IMR-90 (cell line): ENCODE measurements at regions of chr11 and their contacts with region 1.

Region 1: DNA sequence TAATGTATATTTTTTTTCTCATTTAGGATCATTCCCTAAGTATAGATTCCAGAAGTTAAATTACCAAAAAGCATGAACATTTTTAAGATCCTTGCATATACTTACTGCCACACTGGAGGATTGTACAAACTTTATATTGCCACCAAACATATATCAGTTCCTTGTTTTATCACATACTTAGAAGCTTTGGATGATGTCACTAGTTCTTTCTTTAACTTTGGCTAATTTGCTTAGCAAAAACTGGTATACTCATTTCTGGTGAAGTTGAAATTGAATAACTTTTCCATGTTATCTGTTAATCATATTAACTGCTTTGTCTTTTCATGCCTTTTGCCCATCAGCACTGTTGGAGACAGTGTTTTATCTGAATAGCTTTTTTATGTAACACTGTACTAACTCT is 31.6 kb upstream of the PRDM10 start:
- DNase-seq: no peak
- ATAC-seq: no peak
- H3K4me3 ChIP-seq: no peak overlapping the region
- H3K27ac ChIP-seq: no peak overlapping the region
- H3K4me1 ChIP-seq: no peaks in the 10 kb centered on the region
- H3K27me3 ChIP-seq: no peaks in the 10 kb centered on the region
- CTCF ChIP-seq: no peak
- POLR2A ChIP-seq: no peak
- RAD21 ChIP-seq: no peak

Region 2: DNA sequence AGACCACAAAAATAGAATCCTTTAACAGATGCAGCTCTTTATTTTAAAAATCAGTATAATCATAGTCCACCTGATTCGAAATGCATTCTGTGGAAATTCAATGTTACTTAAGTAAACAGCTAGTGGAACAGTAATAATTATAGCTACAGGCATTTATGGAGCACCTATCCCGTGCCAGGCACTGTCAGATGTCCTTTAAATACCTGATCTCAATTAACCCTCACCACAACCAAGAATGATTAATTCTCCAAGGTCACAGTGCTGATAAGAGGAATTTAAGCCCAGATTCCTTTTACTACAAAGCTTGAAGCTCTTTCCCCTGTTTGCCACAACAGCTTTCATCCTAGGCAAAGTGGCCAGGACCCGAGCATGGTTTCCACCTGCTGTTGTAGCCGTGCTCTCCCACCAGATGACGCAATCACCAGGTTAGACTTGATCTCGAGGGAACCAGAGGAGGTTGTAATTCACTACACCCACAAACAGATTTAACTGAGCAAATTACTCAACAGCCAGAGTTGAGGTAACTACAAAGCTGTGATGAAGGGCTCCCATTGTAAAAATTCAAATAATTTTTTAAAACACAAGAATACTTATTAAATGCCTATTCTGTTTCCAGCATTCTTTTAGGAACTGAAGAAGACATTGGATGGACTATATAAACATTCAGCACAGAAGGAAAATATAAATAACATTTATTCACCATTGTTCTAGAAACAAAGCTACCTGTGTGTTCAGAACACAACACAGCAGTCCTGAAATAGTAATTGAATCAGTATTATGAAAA is 41.9 kb before region 1 on chr11:
- CTCF ChIA-PET with region 1: no interaction called
- POLR2A ChIA-PET with region 1: no interaction called
- dilution Hi-C with region 1: no loop called
- in situ Hi-C with region 1: no loop called
- intact Hi-C with region 1: no loop called
- DNase-seq: peak; percentile 22
- ATAC-seq: no peak
- H3K4me3 ChIP-seq: no peak overlapping the region
- H3K27ac ChIP-seq: no peak overlapping the region
- H3K4me1 ChIP-seq: peaks cover 3% of the 10 kb centered on the region; the same call in 1 of the 2 replicates
- H3K27me3 ChIP-seq: no peaks in the 10 kb centered on the region
- CTCF ChIP-seq: no peak
- POLR2A ChIP-seq: no peak
- RAD21 ChIP-seq: no peak

Region 3: DNA sequence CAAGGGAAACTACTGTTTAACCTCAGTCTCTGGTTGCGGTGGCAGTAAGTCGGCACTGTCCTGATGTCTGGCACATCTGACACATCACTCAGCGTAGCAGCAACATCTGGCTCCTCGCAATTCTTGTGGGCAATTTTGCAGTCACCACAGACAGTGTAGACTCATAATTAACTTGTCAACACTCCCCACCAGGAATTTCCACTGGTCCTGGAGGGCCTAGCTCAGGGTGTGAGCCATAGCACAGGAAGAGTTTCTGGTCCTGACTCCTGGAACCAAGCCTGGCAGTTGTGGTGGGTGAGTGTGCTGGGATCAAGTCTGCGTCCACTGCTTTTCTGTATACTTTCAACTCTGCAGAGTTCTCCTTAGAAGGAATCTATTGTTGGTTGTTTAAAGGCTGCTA is 672.3 kb after region 1 on chr11:
- CTCF ChIA-PET with region 1: interaction called, 10 read pairs
- POLR2A ChIA-PET with region 1: no interaction called
- dilution Hi-C with region 1: no loop called
- in situ Hi-C with region 1: no loop called
- intact Hi-C with region 1: no loop called
- DNase-seq: peak; percentile 40
- ATAC-seq: no peak
- H3K4me3 ChIP-seq: no peak overlapping the region
- H3K27ac ChIP-seq: no peak overlapping the region
- H3K4me1 ChIP-seq: peaks cover 22% of the 10 kb centered on the region
- H3K27me3 ChIP-seq: no peaks in the 10 kb centered on the region
- CTCF ChIP-seq: no peak
- POLR2A ChIP-seq: no peak
- RAD21 ChIP-seq: no peak

Region 4: GRCh38 chr11:130847517-130847916 is 813.3 kb after region 1 on chr11:
- CTCF ChIA-PET with region 1: no interaction called
- POLR2A ChIA-PET with region 1: no interaction called
- dilution Hi-C with region 1: no loop called
- in situ Hi-C with region 1: no loop called
- intact Hi-C with region 1: no loop called
- DNase-seq: peak; percentile 87
- ATAC-seq: peak; percentile 79
- H3K4me3 ChIP-seq: peak overlapping the region; percentile 26; the same call in 1 of the 2 replicates
- H3K27ac ChIP-seq: no peak overlapping the region; the same call in 1 of the 2 replicates
- H3K4me1 ChIP-seq: peaks cover 12% of the 10 kb centered on the region
- H3K27me3 ChIP-seq: no peaks in the 10 kb centered on the region
- CTCF ChIP-seq: no peak
- POLR2A ChIP-seq: no peak
- RAD21 ChIP-seq: no peak